CD8-positive, alpha-beta T cell (primary cell): ENCODE measurements at regions of chr17 and their contacts with region 1.

Region 1: GRCh38 chr17:77061669-77062068 is 79.1 kb upstream of the SEC14L1 start:
- DNase-seq: no peak
- ATAC-seq: no peak
- H3K4me3 ChIP-seq: no peak overlapping the region
- H3K4me3 Mint-ChIP-seq: no peak overlapping the region
- H3K27ac ChIP-seq: no peak overlapping the region
- H3K27ac Mint-ChIP-seq: no peak overlapping the region
- H3K4me1 ChIP-seq: no peaks in the 10 kb centered on the region
- H3K4me1 Mint-ChIP-seq: peaks cover under 1% of the 10 kb centered on the region
- H3K27me3 ChIP-seq: peaks cover 0 to 5% of the 10 kb centered on the region in 2 experiments
- H3K27me3 Mint-ChIP-seq: peaks cover 12% of the 10 kb centered on the region
- CTCF ChIP-seq: no peak

Region 2: GRCh38 chr17:76816590-76817135 is 245.0 kb before region 1 on chr17:
- CTCF ChIA-PET with region 1: interaction called, 3 read pairs
- POLR2A ChIA-PET with region 1: no interaction called
- intact Hi-C with region 1: loop called (anchors 1 kb)
- DNase-seq: peak; percentile 14 to 78 (median 65)
- ATAC-seq: peak; percentile 97
- H3K4me3 ChIP-seq: no peak overlapping the region
- H3K4me3 Mint-ChIP-seq: peak overlapping the region; percentile 3
- H3K27ac ChIP-seq: no peak overlapping the region
- H3K27ac Mint-ChIP-seq: no peak overlapping the region
- H3K4me1 ChIP-seq: peaks cover 7% of the 10 kb centered on the region
- H3K4me1 Mint-ChIP-seq: peaks cover 8% of the 10 kb centered on the region
- H3K27me3 ChIP-seq: no peaks in the 10 kb centered on the region
- H3K27me3 Mint-ChIP-seq: no peaks in the 10 kb centered on the region
- CTCF ChIP-seq: peak; percentile 76